Activated CD4-positive, alpha-beta T cell treated with anti-CD3 and anti-CD28 coated beads for 36 hours (primary cell): ENCODE measurements at regions of chr2 and their contacts with region 1.

Region 1: DNA sequence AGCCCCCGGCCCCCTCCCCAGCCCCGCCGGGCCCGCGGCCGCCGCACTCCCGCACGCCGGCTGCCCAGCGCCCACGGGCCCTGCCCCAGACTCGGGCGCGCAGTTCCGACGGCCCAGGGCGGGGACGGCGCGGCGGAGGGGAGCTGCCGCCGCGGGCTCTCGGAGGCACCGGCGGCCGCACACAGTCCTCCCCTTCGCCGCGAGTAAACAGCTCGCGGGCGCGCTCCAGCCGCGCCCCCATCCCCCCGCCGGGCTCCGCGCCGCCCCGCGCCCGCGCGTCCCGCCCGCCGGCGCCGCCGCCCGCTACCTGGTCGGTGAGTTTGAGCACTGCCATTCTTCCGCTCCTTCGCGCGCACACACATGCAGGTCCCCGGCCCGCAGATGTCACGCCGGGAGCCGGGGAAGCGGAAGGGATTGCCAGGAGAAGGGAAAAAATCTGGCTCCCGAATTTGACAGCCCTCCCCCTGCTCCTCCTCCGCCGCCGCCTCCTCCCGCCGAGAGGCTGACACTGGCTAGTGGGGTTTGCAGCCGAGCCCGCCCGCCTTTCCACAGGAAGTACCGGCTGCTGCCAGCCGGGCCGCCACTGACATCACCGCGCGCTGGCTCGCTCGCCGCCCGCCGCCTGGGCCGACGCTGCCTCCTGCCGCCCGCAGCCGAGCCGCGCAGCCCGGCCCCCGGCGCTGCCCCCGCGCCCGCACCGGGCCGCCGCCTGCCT is at the start of gene ANKRD44:
- DNase-seq: peak; percentile 93
- ATAC-seq: peak; percentile 69
- H3K4me3 Mint-ChIP-seq: peak within 1 kb of the TSS; percentile 93
- H3K27ac Mint-ChIP-seq: peak within 1 kb of the TSS; percentile 98
- H3K4me1 Mint-ChIP-seq: peaks cover 67% of the 10 kb centered on the region
- H3K27me3 Mint-ChIP-seq: no peaks in the 10 kb centered on the region
- total RNA-seq, gene ANKRD44: 122 to 181 TPM

Region 2: GRCh38 chr2:196926562-196927375 is 383.7 kb before region 1 on chr2 and contains the start of gene PGAP1:
- CTCF ChIA-PET with region 1: no interaction called
- POLR2A ChIA-PET with region 1: no interaction called
- intact Hi-C with region 1: loop called in 1 of 2 experiments (anchors 2 kb)
- DNase-seq: peak; percentile 94
- ATAC-seq: peak; percentile 80
- H3K4me3 Mint-ChIP-seq: peak within 1 kb of the TSS; percentile 92
- H3K27ac Mint-ChIP-seq: peak within 1 kb of the TSS; percentile 99
- H3K4me1 Mint-ChIP-seq: peaks cover 31% of the 10 kb centered on the region
- H3K27me3 Mint-ChIP-seq: no peaks in the 10 kb centered on the region
- total RNA-seq, gene PGAP1: 22.2 to 25.1 TPM

Region 3: DNA sequence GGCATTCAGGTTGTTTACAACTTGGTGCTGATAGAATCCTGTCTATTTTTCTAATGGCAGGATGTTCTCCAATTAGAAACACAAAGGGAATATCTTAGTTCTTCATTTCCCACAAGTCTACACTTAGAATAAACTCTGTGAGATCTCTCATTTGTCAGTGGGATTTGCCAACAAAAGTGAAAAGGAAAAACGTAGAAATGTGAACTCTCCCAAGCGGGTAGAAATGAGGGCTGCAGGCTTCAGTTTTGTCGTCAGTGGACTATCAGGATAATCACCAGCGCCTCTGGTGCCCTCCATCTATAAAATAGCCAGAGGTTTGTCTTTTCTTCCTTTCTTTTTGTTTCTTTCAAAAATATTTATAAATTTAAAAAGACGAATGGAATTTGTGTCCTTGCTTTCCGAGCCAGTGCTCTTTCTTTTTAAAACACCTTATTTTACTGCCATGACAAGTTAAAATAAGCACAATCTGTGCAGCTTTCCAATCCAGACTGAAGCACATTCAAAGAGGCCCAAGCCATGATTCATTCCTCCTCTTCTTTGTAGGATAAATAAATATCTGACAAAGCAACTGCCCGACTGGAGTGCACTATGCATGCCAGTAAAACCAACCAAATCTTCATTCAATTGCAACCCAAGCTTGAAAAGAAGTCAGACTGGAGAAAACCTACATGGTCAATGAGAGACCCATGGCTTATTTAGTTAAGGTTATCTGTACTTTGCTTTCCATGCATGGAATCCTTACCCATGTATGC is 185.6 kb before region 1 on chr2:
- CTCF ChIA-PET with region 1: interaction called, 5 read pairs
- POLR2A ChIA-PET with region 1: no interaction called
- intact Hi-C with region 1: loop called in 1 of 2 experiments (anchors 5 kb)
- DNase-seq: no peak
- ATAC-seq: no peak
- H3K4me3 Mint-ChIP-seq: no peak overlapping the region
- H3K27ac Mint-ChIP-seq: no peak overlapping the region
- H3K4me1 Mint-ChIP-seq: peaks cover 53% of the 10 kb centered on the region
- H3K27me3 Mint-ChIP-seq: no peaks in the 10 kb centered on the region

Region 4: GRCh38 chr2:197198890-197199289 is 111.5 kb before region 1 on chr2:
- CTCF ChIA-PET with region 1: interaction called, 12 read pairs
- POLR2A ChIA-PET with region 1: interaction called, 23 read pairs
- intact Hi-C with region 1: loop called (anchors 1 to 2 kb)
- DNase-seq: peak; percentile 93
- ATAC-seq: peak; percentile 93
- H3K4me3 Mint-ChIP-seq: peak overlapping the region; percentile 77
- H3K27ac Mint-ChIP-seq: peak overlapping the region; percentile 91
- H3K4me1 Mint-ChIP-seq: peaks cover 90% of the 10 kb centered on the region
- H3K27me3 Mint-ChIP-seq: no peaks in the 10 kb centered on the region

Region 5: DNA sequence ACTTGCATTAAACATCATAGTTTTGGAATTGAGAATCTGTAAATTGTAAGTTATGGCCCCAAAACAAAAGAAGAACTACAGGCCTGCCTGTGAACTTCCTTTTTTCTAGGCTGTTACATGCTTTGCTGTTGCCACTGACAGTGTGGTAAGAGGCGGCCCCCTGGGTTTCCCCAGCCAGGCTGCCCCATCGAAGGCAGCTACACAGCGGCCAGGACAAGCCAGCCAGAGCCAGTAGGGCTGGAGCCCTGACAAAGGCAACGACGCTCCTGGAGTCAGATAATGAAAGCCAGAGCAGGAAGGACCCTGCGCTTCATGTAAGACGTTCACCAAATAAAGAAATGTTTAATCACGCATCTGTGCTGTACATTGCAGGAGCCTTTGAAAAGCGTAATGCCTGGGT is 54.9 kb before region 1 on chr2:
- CTCF ChIA-PET with region 1: interaction called, 7 read pairs
- POLR2A ChIA-PET with region 1: interaction called, 7 read pairs
- intact Hi-C with region 1: loop called (anchors 1 to 2 kb)
- DNase-seq: peak; percentile 90
- ATAC-seq: peak; percentile 89
- H3K4me3 Mint-ChIP-seq: peak overlapping the region; percentile 75
- H3K27ac Mint-ChIP-seq: peak overlapping the region; percentile 96
- H3K4me1 Mint-ChIP-seq: peaks cover 80% of the 10 kb centered on the region
- H3K27me3 Mint-ChIP-seq: no peaks in the 10 kb centered on the region

Region 6: GRCh38 chr2:197434541-197435513 is 124.4 kb after region 1 on chr2 and contains the start of gene SF3B1:
- CTCF ChIA-PET with region 1: no interaction called
- POLR2A ChIA-PET with region 1: no interaction called
- intact Hi-C with region 1: loop called in 1 of 2 experiments (anchors 5 kb)
- DNase-seq: peak; percentile 100
- ATAC-seq: peak; percentile 94
- H3K4me3 Mint-ChIP-seq: peak within 1 kb of the TSS; percentile 98
- H3K27ac Mint-ChIP-seq: peak within 1 kb of the TSS; percentile 99
- H3K4me1 Mint-ChIP-seq: peaks cover 44% of the 10 kb centered on the region
- H3K27me3 Mint-ChIP-seq: no peaks in the 10 kb centered on the region
- total RNA-seq, gene SF3B1: 262 to 277 TPM